Aorta (tissue), 5 donors: ENCODE measurements at regions of chr20 and their contacts with region 1.

Region 1: GRCh38 chr20:44180814-44181213 is 6.2 kb downstream of the JPH2 start:
- DNase-seq: peak; percentile 80 to 84
- ATAC-seq: peak; percentile 70
- H3K4me3 ChIP-seq: peak overlapping the region; percentile 1 to 22
- H3K27ac ChIP-seq: peak overlapping the region; percentile 39 to 73
- H3K4me1 ChIP-seq: peaks cover 0 to 3% of the 10 kb centered on the region in 2 donors
- H3K27me3 ChIP-seq: no peaks in the 10 kb centered on the region

Region 2: GRCh38 chr20:43549416-43550065 is 631.3 kb before region 1 on chr20:
- intact Hi-C with region 1: no loop called
- DNase-seq: peak in 1 of 2 donors; percentile 5
- ATAC-seq: no peak
- H3K4me3 ChIP-seq: no peak overlapping the region
- H3K27ac ChIP-seq: no peak overlapping the region
- H3K4me1 ChIP-seq: no peaks in the 10 kb centered on the region
- H3K27me3 ChIP-seq: no peaks in the 10 kb centered on the region

Region 3: DNA sequence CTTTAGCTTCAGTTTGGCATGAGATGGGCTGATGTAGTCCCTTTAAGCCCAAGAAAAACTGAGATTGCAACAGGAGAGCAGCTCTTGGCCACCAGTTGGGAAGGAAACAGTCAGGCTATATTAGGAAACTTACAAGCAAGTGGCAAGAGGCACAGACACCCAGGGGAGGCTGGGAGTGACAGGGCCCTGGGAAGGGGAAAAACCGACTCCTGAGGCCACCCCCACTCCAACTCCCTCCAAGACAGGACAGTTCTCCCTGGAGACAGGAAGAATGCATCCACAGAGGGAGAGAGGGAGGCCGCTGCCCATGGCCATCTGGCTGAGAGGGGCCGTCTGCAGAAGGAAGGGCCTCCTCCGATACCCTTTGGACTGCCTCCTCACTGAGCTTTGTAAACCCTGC is 14.3 kb before region 1 on chr20:
- intact Hi-C with region 1: loop called in 1 of 2 experiments (anchors 2 kb)
- DNase-seq: peak; percentile 83 to 88
- ATAC-seq: peak; percentile 88
- H3K4me3 ChIP-seq: no peak overlapping the region
- H3K27ac ChIP-seq: peak overlapping the region; percentile 90 to 96
- H3K4me1 ChIP-seq: peaks cover 5 to 13% of the 10 kb centered on the region in 2 donors
- H3K27me3 ChIP-seq: no peaks in the 10 kb centered on the region

Region 4: GRCh38 chr20:44217342-44218092 is 36.7 kb after region 1 on chr20:
- intact Hi-C with region 1: no loop called
- DNase-seq: peak in 1 of 2 donors; percentile 72
- ATAC-seq: no peak
- H3K4me3 ChIP-seq: no peak overlapping the region
- H3K27ac ChIP-seq: no peak overlapping the region
- H3K4me1 ChIP-seq: no peaks in the 10 kb centered on the region
- H3K27me3 ChIP-seq: no peaks in the 10 kb centered on the region